ENCODE measurements at regions of chr2 and their contacts with region 1.

Region 1: DNA sequence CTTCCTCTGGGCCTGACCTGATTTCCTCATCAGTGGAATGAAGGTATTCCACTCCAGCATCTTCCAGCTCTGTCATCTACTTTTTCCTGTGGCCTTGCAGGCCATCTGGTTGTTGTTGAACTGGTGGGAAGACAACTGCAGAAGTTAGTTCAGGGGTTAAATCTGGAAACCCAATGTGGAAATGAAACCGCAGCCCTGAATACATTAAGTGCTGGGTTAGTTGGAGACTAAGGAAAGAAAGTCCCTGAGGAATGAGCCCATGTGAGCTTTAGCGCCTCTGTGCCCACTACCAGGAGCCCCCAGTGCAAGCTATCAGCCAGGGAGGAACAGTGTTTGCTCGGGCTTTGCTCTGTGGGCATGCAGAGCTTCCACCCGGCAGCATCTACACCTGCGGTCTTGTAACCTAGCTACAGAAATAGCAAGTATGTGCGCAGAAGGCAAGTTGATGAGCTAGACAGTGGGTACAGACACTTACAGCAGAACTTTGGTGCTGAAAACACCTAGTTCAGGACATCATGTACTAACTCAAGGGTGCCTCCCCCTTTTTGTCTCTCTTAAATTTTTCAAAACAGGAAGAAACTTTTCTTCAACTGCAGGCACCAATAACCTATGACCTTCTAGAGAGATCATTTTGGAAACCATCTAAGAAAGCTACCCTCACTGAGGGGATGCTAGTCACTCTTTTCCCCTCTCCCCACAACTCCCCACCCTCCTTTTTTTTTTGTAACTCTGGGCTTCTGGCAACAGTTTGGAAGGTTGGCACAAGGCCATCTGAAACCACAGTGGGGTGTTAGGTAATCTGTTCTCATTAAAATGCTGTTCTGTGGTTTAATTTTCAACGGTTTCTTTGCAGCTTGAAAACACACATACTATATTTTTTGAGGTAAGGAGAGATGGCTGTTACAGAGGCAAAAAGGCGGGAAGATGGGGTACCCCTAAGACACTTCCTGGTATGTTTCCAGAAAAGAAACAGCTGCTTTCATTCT is 18.3 kb upstream of the CXCR4 start:
- DNase-seq: peak; percentile 78
- H3K4me3 Mint-ChIP-seq: no peak overlapping the region
- H3K27ac Mint-ChIP-seq: peak overlapping the region; percentile 79
- H3K4me1 Mint-ChIP-seq: peaks cover 94% of the 10 kb centered on the region
- H3K27me3 Mint-ChIP-seq: peaks cover 25% of the 10 kb centered on the region

Region 2: DNA sequence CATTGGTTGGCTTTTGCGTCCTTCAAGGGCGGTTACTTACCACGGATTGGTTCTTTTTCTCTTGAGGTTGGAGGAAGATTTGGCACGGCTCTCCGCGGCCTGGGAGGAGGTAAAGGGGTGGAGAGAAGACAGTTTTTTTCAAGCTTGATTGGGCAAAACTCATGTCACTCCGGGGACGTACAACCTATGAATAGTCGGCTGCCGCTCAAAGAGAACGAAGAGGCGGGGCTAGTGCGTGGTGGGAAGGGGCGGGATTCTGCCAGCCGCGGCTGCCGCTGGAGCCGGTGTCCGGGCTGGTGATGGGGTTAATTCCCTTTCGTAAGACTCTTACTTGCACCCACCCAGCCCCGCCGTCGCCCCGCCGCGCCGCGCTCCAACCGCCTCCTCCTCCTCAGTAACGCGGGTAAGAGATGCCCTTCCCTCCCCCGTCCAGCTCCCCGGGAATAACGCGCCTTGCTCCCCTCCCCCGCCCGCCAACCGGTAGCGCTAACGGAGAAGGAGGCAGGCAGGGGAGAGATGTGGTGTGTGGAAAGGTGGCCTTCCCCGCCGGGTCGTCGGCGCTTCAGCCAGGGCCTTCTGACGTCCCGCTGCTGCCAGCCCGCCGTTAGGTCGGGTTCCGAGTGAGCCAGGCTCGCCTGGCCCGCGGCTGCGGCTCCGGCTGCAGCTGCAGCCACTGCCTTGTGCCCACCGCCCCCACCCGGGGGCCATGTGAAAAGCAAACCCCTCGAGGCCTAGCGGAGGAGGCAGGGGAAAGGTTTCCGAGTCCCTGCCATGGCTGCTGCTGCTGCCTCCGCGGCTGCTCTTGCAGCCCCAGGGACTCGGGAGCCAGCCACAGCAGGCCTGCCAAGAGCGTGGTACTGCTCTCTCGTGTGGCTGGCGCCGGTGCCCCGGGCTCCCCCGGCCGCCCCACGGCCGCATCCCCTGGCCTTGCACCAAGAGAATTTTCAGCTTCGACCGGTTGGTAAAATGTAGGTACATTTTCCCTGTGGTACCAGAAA is 604.7 kb before region 1 on chr2 and contains the start of gene R3HDM1:
- CTCF ChIA-PET with region 1: no interaction called
- intact Hi-C with region 1: loop called (anchors 2 kb)
- DNase-seq: peak; percentile 98
- H3K4me3 Mint-ChIP-seq: no peak within 1 kb of the TSS
- H3K27ac Mint-ChIP-seq: peak within 1 kb of the TSS; percentile 39
- H3K4me1 Mint-ChIP-seq: peaks cover 39% of the 10 kb centered on the region
- H3K27me3 Mint-ChIP-seq: no peaks in the 10 kb centered on the region
- total RNA-seq, gene R3HDM1: 61.9 to 73.1 TPM

Region 3: GRCh38 chr2:135948642-135949355 is 187.4 kb before region 1 on chr2:
- CTCF ChIA-PET with region 1: no interaction called
- intact Hi-C with region 1: loop called (anchors 1 kb)
- DNase-seq: peak; percentile 35
- H3K4me3 Mint-ChIP-seq: no peak overlapping the region
- H3K27ac Mint-ChIP-seq: peak overlapping the region; percentile 74
- H3K4me1 Mint-ChIP-seq: peaks cover 45% of the 10 kb centered on the region
- H3K27me3 Mint-ChIP-seq: no peaks in the 10 kb centered on the region

Region 4: GRCh38 chr2:136059036-136059472 is 77.2 kb before region 1 on chr2:
- CTCF ChIA-PET with region 1: interaction called, 6 read pairs
- intact Hi-C with region 1: loop called (anchors 1 kb)
- DNase-seq: no peak
- H3K4me3 Mint-ChIP-seq: no peak overlapping the region
- H3K27ac Mint-ChIP-seq: no peak overlapping the region
- H3K4me1 Mint-ChIP-seq: peaks cover 59% of the 10 kb centered on the region
- H3K27me3 Mint-ChIP-seq: no peaks in the 10 kb centered on the region

Region 5: DNA sequence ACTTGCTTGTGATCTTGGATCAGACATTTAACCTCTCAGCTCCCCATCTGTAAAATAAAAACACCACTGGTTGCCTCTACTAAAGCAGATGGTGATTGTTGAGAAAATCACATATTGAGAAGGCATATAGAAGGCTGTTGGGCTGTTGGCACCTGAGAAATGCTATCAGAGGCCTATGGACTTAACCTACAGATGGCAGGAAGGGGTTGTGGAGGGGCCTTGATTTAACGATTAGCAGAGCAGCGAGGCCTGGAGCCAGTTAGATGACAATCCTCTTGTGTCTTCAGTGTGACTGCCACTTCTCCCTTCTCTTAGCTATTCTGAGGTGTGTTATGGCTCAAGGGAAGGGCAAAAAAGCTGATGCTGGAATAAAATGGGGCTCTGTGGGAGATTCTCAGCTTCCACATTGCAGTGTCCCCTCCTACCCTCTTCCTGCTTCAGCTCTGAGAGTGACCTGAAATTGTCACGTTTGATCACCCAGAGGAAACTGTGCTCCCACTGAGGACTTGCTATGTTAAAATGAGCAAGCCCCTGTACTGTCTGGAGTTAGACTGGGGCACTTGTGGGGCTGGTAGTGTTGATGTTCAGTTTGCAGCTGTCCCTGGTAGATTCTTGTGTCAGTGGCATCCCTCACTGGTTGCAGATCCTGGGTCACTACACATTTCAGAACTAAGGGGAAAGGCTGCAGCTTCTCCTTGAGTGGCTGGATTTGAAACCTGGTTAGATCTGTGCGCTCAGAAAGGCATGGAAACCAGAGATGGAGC is 49.8 kb before region 1 on chr2:
- CTCF ChIA-PET with region 1: no interaction called
- intact Hi-C with region 1: no loop called
- DNase-seq: no peak
- H3K4me3 Mint-ChIP-seq: no peak overlapping the region
- H3K27ac Mint-ChIP-seq: no peak overlapping the region
- H3K4me1 Mint-ChIP-seq: peaks cover 3% of the 10 kb centered on the region
- H3K27me3 Mint-ChIP-seq: no peaks in the 10 kb centered on the region

Region 6: DNA sequence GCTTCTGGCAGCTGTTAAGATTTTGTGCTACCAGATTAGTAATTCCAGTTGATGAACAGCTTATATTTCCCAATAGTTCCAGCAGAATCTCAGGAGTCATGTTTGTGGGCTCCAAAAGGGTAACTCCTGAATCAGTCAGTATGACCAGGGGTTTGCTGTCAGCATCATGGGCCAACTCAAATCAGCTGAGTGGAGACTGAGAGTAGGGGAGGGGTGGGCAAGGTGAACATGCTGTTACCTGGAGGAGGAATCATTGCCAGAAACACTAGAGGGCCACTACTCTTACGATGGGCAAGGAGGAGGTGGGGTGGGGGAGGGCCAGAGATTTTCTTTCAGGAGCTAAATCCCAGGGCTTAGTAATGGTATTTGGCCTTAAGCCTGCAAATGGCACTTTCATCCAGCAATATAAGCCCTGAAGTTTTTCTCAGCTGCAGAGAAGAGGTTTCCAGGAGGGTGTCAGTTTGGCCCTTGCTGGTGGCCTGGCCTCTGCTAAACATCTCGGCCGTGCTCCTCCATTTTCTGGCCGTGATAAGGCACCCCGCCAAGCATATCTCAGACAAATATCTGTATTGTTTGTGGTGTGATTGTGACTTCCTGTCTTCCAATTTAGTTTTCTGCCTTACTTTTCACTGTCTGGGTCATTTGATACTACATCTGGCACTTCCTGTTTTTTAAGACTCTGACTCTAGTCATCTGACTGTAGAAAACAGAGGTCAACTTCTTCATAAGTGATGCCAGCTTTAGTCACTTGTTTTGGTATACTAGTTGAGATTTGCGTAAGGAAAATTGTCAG is 102.3 kb after region 1 on chr2:
- CTCF ChIA-PET with region 1: interaction called, 3 read pairs
- intact Hi-C with region 1: loop called (anchors 1 kb)
- DNase-seq: peak; percentile 49
- H3K4me3 Mint-ChIP-seq: peak overlapping the region; percentile 10
- H3K27ac Mint-ChIP-seq: peak overlapping the region; percentile 77
- H3K4me1 Mint-ChIP-seq: peaks cover 39% of the 10 kb centered on the region
- H3K27me3 Mint-ChIP-seq: no peaks in the 10 kb centered on the region

Region 7: DNA sequence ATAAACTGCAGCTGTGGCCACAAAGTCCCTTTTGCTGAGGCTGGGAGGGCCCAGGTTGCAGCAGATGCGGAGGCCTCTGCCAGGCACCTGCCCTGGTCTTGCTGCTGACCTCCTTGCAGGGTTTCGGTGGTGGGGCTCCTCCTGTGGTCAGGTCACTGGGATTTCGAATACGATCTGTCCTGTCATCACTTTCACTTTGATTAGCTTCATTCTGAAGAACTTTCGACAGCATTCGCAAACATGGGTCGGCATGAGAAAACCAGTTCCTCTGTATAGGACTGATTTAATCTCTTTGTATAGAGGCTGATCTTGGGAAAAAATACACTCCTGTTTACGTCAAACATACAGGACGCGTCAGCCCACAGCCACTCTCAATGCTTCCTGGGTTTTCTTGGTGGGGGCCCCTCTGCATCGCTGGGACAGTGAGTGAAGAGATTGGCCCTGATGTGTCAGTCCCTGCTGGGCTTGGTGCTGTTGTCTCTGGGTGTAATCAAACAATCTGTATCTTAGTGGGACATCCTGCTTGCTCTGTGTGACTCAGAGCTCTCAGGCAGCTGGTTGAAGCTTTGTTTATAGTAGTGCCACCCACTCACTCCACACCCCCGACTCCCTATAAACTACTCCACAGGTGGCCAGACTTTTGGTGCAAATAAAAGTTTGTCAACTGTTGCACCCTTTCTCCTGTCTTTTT is 191.1 kb after region 1 on chr2:
- CTCF ChIA-PET with region 1: no interaction called
- intact Hi-C with region 1: loop called (anchors 1 kb)
- DNase-seq: peak; percentile 89
- H3K4me3 Mint-ChIP-seq: peak overlapping the region; percentile 52
- H3K27ac Mint-ChIP-seq: peak overlapping the region; percentile 82
- H3K4me1 Mint-ChIP-seq: peaks cover 62% of the 10 kb centered on the region
- H3K27me3 Mint-ChIP-seq: no peaks in the 10 kb centered on the region